ENCODE measurements at regions of chr2 and their contacts with region 1.

Region 1: GRCh38 chr2:171922230-171923022 is at the start of gene HAT1:
- DNase-seq: peak; percentile 98
- ATAC-seq: peak; percentile 98
- H3K4me3 ChIP-seq: peak within 1 kb of the TSS; percentile 81 to 98 (median 96)
- H3K4me3 Mint-ChIP-seq: peak within 1 kb of the TSS; percentile 97
- H3K27ac ChIP-seq: peak within 1 kb of the TSS; percentile 87 to 93
- H3K27ac Mint-ChIP-seq: peak within 1 kb of the TSS; percentile 99
- H3K4me1 ChIP-seq: peaks cover 16% of the 10 kb centered on the region in 2 donors
- H3K4me1 Mint-ChIP-seq: peaks cover 31% of the 10 kb centered on the region
- H3K27me3 ChIP-seq: no peaks in the 10 kb centered on the region
- H3K27me3 Mint-ChIP-seq: no peaks in the 10 kb centered on the region
- CTCF ChIP-seq: no peak
- total RNA-seq, gene HAT1: 25.1 and 26.9 TPM in 2 replicates

Region 2: GRCh38 chr2:171893824-171894611 is 28.4 kb before region 1 on chr2 and contains the start of gene SLC25A12:
- CTCF ChIA-PET with region 1: interaction called, 11 read pairs
- POLR2A ChIA-PET with region 1: interaction called, 10 read pairs
- intact Hi-C with region 1: loop called (anchors 1 kb)
- DNase-seq: peak; percentile 87
- ATAC-seq: peak; percentile 92
- H3K4me3 ChIP-seq: peak within 1 kb of the TSS; percentile 78 to 93 (median 88)
- H3K4me3 Mint-ChIP-seq: peak within 1 kb of the TSS; percentile 99
- H3K27ac ChIP-seq: peak within 1 kb of the TSS; percentile 69 to 88
- H3K27ac Mint-ChIP-seq: peak within 1 kb of the TSS; percentile 91
- H3K4me1 ChIP-seq: peaks cover 14 to 16% of the 10 kb centered on the region in 2 donors
- H3K4me1 Mint-ChIP-seq: peaks cover 25% of the 10 kb centered on the region
- H3K27me3 ChIP-seq: no peaks in the 10 kb centered on the region
- H3K27me3 Mint-ChIP-seq: no peaks in the 10 kb centered on the region
- CTCF ChIP-seq: no peak
- total RNA-seq, gene SLC25A12: 19.6 and 21.0 TPM in 2 replicates

Region 3: GRCh38 chr2:171999604-172000469 is 77.4 kb after region 1 on chr2 and contains the start of gene METAP1D:
- CTCF ChIA-PET with region 1: no interaction called
- POLR2A ChIA-PET with region 1: no interaction called
- intact Hi-C with region 1: loop called (anchors 1 kb)
- DNase-seq: peak; percentile 90
- ATAC-seq: peak; percentile 94
- H3K4me3 ChIP-seq: peak within 1 kb of the TSS; percentile 55 to 93 (median 83)
- H3K4me3 Mint-ChIP-seq: peak within 1 kb of the TSS; percentile 98
- H3K27ac ChIP-seq: peak within 1 kb of the TSS; percentile 12 to 73
- H3K27ac Mint-ChIP-seq: peak within 1 kb of the TSS; percentile 93
- H3K4me1 ChIP-seq: peaks cover 13 to 14% of the 10 kb centered on the region in 2 donors
- H3K4me1 Mint-ChIP-seq: peaks cover 18% of the 10 kb centered on the region
- H3K27me3 ChIP-seq: peaks cover 0 to 3% (median 0%) of the 10 kb centered on the region in 4 experiments
- H3K27me3 Mint-ChIP-seq: peaks cover 6% of the 10 kb centered on the region
- CTCF ChIP-seq: no peak
- total RNA-seq, gene METAP1D: 8.2 and 8.9 TPM in 2 replicates

Region 4: DNA sequence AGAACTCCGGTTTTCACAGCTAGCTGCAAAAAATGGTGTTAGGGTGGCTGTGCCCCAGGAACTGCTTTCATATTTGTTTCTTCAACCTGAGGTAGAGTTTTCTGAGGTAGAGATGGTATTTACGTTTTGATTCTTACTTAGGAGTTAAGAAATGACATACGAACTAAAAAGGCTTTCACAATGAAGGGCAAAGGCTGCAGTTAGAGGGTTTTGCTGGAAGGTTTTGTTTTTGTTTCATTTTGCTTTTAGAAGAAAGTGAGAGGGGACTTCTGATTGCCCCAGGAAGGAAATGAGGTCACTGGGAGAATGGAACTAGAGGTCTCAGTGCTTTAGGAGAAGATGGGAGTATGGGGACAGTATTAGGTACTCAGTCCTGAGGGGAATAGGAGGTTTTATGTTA is 1447.8 kb after region 1 on chr2:
- CTCF ChIA-PET with region 1: no interaction called
- POLR2A ChIA-PET with region 1: no interaction called
- intact Hi-C with region 1: no loop called
- DNase-seq: no peak
- ATAC-seq: no peak
- H3K4me3 ChIP-seq: no peak overlapping the region
- H3K4me3 Mint-ChIP-seq: peak overlapping the region; percentile 13
- H3K27ac ChIP-seq: no peak overlapping the region
- H3K27ac Mint-ChIP-seq: no peak overlapping the region
- H3K4me1 ChIP-seq: peaks cover 0 to 3% of the 10 kb centered on the region in 2 donors
- H3K4me1 Mint-ChIP-seq: peaks cover 6% of the 10 kb centered on the region
- H3K27me3 ChIP-seq: no peaks in the 10 kb centered on the region
- H3K27me3 Mint-ChIP-seq: no peaks in the 10 kb centered on the region
- CTCF ChIP-seq: no peak

Measured in B cell (primary cell).